Activated CD4-positive, alpha-beta T cell treated with anti-CD3 and anti-CD28 coated beads for 36 hours (primary cell): ENCODE measurements at regions of chr7 and their contacts with region 1.

Region 1: DNA sequence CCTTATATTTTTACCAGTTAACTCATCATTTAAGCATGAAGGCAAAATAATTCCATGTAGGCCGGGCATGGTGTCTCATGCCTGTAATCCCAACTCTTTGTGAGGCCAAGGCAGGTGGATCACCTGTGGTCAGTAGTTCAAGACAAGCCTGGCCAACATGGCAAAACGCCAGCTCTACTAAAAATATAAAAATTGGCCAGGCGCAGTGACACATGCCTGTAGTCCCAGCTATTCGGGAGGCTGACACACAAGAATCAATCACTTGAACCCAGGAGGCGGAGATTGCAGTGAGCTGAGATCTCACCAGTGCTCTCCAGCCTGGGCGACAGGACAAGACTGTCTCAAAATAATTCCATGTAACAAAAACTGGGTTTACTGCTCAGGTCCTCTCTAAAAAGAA is 18.3 kb downstream of the HNRNPA2B1 start:
- DNase-seq: no peak
- ATAC-seq: no peak
- H3K4me3 Mint-ChIP-seq: no peak overlapping the region
- H3K27ac Mint-ChIP-seq: peak overlapping the region; percentile 8
- H3K4me1 Mint-ChIP-seq: peaks cover 43% of the 10 kb centered on the region
- H3K27me3 Mint-ChIP-seq: no peaks in the 10 kb centered on the region

Region 2: DNA sequence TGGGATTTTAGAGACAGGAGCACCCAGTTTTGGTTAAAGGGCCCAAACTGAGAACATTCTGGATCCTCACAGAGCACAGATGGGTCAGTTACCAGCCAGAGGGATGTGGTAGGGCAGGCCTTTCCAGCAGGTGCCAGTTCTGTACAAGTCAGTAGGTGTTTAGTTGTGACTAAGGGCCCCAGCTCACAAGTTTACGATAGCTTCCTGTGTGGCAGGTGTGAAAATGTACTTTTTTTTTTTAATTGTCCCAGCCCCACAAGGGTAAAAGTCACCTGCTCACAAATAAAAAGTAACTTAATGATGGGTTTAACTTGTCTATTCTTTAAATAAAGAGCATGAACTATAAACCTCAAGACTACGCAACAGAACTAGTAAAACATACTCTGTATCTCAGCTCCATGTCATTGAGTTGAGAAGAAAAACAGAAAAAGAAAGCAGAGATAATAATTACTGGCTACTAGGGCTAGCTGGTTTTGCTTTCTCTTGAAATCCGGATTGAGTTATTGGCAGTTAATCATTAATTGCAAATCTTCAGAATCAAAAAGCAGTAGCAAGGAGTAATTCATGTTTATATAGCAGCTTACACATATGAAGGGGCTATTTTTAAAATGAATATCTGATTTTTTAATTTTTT is 14.9 kb before region 1 on chr7:
- CTCF ChIA-PET with region 1: interaction called, 13 read pairs
- POLR2A ChIA-PET with region 1: interaction called, 25 read pairs
- intact Hi-C with region 1: loop called in 1 of 2 experiments (anchors 2 kb)
- DNase-seq: peak; percentile 68
- ATAC-seq: peak; percentile 88
- H3K4me3 Mint-ChIP-seq: peak overlapping the region; percentile 29
- H3K27ac Mint-ChIP-seq: peak overlapping the region; percentile 93
- H3K4me1 Mint-ChIP-seq: peaks cover 33% of the 10 kb centered on the region
- H3K27me3 Mint-ChIP-seq: no peaks in the 10 kb centered on the region

Region 3: DNA sequence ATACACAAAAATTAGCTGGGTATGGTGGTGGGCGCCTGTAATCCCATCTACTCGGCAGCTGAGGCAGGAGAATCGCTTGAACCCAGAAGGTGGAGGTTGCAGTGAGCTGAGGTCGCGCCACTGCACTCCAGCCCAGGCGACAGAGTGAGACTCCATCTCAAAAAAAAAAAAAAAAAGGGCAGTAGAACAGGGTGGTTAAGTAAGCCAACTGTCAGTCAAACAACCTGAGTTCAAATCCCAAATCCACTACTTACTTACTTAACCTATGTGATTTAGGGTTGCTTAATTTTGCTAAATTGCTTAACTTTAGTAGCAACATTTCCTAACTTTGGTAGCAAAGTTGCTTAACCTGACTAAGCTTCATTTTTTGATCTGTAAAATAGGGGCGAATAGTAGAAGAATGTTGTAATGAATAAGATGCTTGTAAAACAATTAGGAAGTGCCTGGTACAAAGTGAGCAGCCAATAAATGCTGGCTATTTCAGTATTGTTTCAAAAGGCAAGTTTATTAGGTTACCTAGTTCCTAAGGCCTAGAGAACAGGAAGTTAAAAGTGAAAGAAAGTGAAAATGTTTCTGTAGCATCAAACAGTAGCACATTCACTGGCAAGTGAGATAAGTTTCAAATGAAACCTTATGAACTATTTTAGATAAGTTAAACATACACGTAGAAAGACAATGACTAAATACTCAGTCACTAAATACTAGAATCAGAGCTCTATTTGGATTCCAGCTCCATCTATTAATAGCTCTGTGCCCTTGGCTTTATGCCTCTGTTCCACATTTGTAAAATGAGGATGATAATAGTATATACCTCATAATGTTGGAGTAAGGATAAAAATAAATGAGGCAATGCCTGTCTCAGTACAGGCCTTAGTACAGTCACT is 849.2 kb after region 1 on chr7:
- CTCF ChIA-PET with region 1: no interaction called
- POLR2A ChIA-PET with region 1: no interaction called
- intact Hi-C with region 1: no loop called
- DNase-seq: no peak
- ATAC-seq: peak; percentile 84
- H3K4me3 Mint-ChIP-seq: peak overlapping the region; percentile 22
- H3K27ac Mint-ChIP-seq: peak overlapping the region; percentile 80
- H3K4me1 Mint-ChIP-seq: peaks cover 24% of the 10 kb centered on the region
- H3K27me3 Mint-ChIP-seq: no peaks in the 10 kb centered on the region